ENCODE measurements at regions of chr16 and their contacts with region 1.

Region 1: DNA sequence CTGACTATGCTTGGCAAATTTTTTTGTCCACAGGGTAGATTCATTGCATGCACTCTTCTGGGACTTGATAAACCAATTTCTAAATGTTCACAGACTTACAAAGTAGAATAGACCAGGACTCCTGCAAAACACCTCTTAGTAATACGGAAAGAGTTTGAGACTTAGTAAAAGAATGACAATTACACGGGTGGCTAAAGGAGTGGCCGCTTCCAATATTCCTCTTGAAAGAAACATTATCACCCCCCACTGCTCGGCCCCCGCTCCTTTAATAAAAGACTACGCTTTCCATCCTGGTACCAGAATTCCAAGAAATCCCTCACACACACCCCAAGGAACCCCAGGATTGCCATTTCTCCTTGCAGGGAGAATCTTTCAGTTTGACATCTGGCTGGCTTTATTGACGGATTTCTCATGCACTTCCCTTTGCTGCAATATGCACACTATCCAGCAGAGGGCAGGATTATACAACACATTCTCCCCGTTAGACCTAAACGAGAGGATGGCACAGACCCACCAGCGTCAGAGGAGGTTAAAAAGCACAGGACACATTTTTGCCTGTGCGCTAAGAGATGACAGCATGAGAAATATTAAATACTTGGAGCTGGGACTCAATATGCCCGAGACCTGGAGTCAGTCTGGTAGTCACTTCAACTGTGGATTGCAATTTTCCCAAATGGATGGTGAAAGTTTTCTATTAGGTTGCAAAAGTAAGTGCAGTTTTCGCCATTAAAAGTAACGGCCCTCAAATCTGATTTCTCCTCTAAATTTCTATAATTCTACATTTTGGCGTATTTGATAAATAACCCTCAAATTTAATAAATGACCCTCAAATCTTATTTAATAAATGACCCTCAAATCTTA is 46.6 kb upstream of the NUDT7 start:
- DNase-seq: peak in 34 of 35 experiments; percentile 4 to 76 (median 44)
- ATAC-seq: peak; percentile 29 to 68 (median 60)
- H3K4me3 ChIP-seq: no peak overlapping the region
- H3K4me3 Mint-ChIP-seq: no peak overlapping the region
- H3K27ac ChIP-seq: no peak overlapping the region
- H3K27ac Mint-ChIP-seq: no peak overlapping the region
- H3K4me1 ChIP-seq: no peaks in the 10 kb centered on the region
- H3K4me1 Mint-ChIP-seq: no peaks in the 10 kb centered on the region
- H3K27me3 ChIP-seq: peaks cover 0 to 5% of the 10 kb centered on the region in 2 experiments
- H3K27me3 Mint-ChIP-seq: peaks cover 3 to 4% of the 10 kb centered on the region in 2 donors

Region 2: GRCh38 chr16:77692610-77693009 is 16.9 kb after region 1 on chr16:
- CTCF ChIA-PET with region 1: no interaction called
- POLR2A ChIA-PET with region 1: no interaction called
- DNase-seq: no peak
- ATAC-seq: no peak
- H3K4me3 ChIP-seq: no peak overlapping the region
- H3K4me3 Mint-ChIP-seq: no peak overlapping the region
- H3K27ac ChIP-seq: no peak overlapping the region
- H3K27ac Mint-ChIP-seq: no peak overlapping the region
- H3K4me1 ChIP-seq: no peaks in the 10 kb centered on the region
- H3K4me1 Mint-ChIP-seq: no peaks in the 10 kb centered on the region
- H3K27me3 ChIP-seq: peaks cover 0 to 12% of the 10 kb centered on the region in 2 experiments
- H3K27me3 Mint-ChIP-seq: peaks cover 30 to 37% of the 10 kb centered on the region in 2 donors

Region 3: DNA sequence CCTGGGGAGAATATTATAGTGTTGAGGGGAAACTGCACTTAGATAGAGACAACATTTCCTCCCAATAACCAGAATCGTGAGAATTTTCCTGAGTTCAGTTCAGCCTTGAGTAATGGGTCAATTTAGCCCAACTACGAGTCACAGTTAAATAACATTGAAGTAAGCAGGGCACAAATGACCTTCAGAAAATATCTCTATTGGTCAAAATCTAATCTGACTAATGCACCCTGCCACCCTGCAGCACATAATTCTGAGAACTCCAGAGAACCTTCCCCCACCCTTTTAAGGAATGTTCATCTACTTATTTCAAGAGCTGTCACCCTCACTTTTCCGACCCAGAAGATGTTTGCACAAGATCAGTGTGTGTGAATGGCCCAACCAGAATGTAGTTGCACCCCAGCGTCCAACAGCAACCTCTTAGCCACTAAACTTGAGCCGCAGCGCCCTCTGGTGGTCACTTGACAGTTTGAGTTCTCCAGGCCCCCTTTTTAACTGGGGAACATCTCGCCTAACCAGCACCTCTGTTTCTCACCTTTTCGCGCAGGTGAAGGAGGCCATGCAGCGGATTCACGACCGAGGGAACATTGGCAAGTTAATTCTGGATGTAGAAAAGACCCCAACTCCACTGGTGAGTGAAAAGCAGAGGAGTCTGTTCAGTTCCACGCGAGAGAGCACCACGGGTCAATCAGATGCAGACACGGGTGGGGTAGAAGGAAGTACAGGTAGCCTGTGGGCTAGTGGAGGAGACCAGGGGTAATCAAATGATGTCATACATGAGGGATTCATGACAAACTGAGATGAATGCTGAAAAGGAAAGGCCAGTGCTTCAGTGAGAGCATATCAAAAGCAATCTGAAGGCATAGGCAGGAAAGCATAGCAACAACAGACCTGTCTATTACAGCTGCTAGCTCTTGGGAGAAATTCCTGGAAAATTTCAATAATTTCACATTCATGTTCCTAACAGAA is 295.9 kb after region 1 on chr16:
- CTCF ChIA-PET with region 1: interaction called, 11 to 16 read pairs
- POLR2A ChIA-PET with region 1: no interaction called
- DNase-seq: peak; percentile 16 to 80 (median 60)
- ATAC-seq: peak in 2 of 4 experiments; percentile 43 to 46
- H3K4me3 ChIP-seq: no peak overlapping the region
- H3K4me3 Mint-ChIP-seq: no peak overlapping the region
- H3K27ac ChIP-seq: no peak overlapping the region
- H3K27ac Mint-ChIP-seq: no peak overlapping the region
- H3K4me1 ChIP-seq: no peaks in the 10 kb centered on the region
- H3K4me1 Mint-ChIP-seq: no peaks in the 10 kb centered on the region
- H3K27me3 ChIP-seq: peaks cover 0 to 19% of the 10 kb centered on the region in 2 experiments
- H3K27me3 Mint-ChIP-seq: peaks cover 10 to 13% of the 10 kb centered on the region in 2 donors